Astrocyte of the cerebellum (primary cell): ENCODE measurements at regions of chr10 and their contacts with region 1.

Region 1: DNA sequence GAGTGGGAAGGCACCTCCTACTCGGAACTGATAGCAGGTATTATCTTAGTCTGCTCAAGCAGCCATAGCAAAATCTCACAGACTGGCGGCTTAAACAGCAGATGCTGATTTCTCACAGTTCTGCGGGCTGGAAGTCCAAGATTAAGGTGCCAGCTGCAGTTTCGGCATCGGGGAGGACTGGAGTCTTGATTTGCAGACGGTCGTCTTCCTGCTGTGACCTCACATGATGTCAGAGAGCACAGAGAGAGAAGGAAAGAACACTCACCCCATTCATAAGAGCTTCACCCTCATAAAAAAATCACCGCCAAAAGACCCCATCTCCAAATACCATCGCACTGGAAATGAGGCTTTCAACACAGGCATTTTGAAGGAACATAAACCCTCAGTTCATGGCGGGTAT is 216.5 kb upstream of the PITRM1 start:
- DNase-seq: no peak
- H3K4me3 ChIP-seq: no peak overlapping the region
- CTCF ChIP-seq: no peak

Region 2: DNA sequence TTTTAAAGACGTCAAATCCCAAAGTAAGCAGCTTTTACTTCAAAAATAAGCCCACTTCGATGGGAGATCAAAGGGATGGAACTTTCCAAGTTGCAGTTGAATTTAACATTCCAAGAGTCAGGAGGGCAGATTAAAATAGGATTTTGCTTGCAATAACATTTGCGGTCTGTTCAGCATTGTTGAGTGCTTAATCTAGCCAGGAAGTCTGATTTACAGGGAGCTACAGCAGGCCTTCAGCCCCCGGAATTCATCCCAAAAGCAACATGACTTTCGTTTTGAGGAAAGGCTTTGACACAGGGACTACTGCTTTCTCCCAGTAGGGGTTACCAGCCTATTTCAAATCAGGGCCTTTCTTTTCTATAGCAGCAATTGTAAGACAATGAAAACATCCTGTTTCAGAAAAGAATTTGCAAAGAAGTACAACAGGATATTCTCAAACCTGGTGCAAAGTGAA is 63.1 kb after region 1 on chr10:
- in situ Hi-C with region 1: loop called (anchors 5 kb)
- DNase-seq: peak; percentile 94
- H3K4me3 ChIP-seq: no peak overlapping the region
- CTCF ChIP-seq: peak; percentile 58

Region 3: DNA sequence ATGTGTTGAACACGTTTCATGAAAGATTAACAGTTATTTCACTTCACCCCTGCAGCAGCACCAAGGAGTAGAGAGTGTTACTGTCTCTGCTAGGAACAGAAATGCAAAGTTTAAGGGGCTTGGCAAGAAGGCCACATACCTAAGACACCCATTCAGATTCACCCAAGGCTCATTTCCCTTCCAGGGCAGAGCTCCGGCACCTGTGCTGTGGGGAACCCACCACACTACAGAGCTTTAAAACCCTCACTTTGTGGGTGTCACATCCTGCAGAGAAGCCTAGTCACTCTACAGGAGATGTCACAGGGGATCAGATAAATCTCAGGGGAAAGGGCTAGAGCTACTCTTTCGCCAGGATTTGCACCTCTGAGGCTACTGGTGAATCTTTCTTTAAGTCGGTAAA is 572.0 kb after region 1 on chr10:
- in situ Hi-C with region 1: no loop called
- DNase-seq: no peak
- H3K4me3 ChIP-seq: no peak overlapping the region
- CTCF ChIP-seq: no peak